ENCODE measurements at regions of chr10 and their contacts with region 1.

Region 1: DNA sequence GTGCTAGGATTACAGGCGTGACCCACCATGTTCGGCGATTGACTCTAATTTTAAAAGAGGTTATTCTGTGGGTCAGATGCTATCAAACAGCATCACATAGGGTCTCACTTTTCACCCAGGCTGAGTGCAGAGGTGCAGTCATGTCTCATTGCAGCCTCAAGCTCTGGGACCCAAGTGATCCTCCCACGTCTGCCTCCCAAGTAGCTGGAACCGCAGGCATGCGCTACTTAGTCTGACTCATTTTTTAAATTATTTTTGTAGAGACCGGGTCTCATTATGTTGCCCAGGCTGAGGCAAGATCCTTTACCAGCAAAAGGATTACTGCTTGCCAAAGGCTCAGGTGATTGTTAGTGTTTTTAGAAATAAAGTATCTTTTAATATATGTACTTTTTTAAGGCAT is 42.9 kb upstream of the STOX1 start:
- DNase-seq: no peak
- ATAC-seq: no peak

Region 2: GRCh38 chr10:68471586-68472408 is 312.7 kb before region 1 on chr10 and contains the start of gene DNA2:
- intact Hi-C with region 1: no loop called
- DNase-seq: peak; percentile 68
- ATAC-seq: peak; percentile 90
- total RNA-seq, gene DNA2: 2.0 TPM

Region 3: DNA sequence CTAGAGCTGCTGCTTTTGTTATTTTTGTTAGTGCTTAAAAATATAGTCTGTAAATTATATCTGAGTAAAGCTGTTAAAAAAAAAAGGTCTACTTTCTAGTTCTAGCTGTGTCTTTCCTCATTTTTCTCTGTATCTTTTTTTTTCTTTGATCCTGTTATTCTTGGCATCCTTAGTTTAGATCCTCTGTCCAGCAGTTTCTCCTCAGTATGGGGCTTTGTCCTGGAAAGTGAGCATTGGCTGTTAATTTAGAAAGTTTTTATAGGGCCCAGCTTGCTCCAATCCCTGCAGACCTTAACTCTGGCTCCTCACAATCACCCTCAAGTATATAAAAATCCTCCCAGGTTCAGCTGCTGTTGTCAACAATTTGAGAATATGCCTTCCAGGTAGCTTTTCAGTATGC is 140.1 kb after region 1 on chr10:
- intact Hi-C with region 1: loop called (anchors 10 kb)
- DNase-seq: no peak
- ATAC-seq: no peak